Caco-2 (cell line): ENCODE measurements at regions of chr2 and their contacts with region 1.

Region 1: DNA sequence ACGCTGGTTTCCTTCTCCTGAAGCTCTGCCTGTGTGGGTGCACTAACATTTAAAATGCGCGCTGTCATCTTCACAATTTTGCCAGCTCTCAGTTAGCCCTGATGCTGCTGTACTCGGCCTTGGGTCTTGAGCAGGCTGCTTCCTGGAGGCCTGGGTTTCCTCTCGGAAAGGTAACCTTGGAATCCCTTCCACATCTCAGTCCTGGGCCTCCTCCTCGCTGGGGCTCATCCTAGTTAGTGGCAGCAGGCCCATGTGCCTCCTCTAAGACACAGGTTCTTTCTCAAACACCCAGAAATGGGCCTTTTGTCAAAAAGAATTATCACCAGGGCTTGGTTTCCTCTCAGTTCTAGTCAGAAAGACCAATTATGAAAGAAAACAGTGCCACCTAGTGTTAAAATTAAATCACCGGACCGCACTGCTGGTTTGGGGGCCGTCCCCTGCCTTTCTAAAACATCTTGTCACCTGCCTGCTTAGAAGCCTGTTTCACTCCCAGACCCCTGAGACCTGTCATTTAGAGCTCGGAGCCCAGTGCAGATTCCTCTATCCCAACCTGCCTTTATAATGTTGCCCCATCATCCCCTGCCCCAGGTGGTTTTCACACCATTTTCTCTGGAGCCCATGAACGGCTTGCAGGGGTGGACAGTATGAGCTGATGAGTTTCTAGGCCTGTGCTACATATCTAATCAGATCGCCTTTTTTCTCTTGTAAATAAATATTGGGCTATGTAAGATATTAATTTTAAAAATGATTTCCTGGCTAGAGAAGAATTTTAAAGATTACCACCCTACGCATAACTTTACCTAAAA is 42.4 kb downstream of the HK2 start:
- DNase-seq: peak in 1 of 2 experiments; percentile 74
- H3K4me3 ChIP-seq: no peak overlapping the region
- H3K4me3 Mint-ChIP-seq: no peak overlapping the region
- H3K27ac Mint-ChIP-seq: peak overlapping the region; percentile 74
- H3K4me1 ChIP-seq: no peaks in the 10 kb centered on the region
- H3K4me1 Mint-ChIP-seq: no peaks in the 10 kb centered on the region
- H3K27me3 ChIP-seq: no peaks in the 10 kb centered on the region
- H3K27me3 Mint-ChIP-seq: no peaks in the 10 kb centered on the region
- CTCF ChIP-seq: peak; percentile 50 to 65

Region 2: DNA sequence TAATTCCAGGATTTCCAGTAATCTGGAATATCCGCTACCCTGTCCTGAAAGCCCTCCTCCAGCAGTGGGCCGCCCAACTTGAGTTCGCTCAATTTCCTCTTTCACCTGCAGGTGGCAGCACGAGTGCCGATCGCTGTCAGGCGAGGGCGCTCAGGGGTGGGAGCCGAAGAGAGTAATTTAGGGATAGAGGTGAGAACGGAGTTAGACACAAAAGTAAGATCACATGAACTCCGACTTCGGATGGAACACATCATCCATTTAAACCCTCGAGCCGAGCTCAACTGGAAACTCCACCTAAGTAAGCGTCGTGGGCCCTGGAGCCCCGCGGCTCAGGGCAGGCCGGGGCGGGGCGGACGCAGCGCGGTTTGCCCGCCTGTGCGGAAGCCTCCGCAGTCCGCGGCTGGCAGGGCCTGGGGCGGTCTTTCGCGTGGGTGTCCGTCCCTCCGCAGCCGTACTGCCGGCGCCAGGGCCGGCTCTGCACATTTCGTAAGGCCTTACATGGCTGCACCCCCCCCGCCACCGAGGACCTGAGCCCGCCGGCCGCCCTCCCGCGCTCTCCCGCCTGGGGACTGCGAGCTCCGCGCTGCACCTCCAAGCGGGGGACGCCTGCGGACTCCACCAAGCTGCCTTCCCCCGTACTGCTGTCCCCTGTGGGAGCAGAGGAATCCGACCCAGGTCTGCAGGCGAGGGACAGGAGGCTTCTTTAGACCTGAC is 161.0 kb before region 1 on chr2:
- CTCF ChIA-PET with region 1: interaction called, 22 read pairs
- POLR2A ChIA-PET with region 1: no interaction called
- intact Hi-C with region 1: loop called (anchors 1 kb)
- DNase-seq: peak; percentile 80 to 90
- H3K4me3 ChIP-seq: peak overlapping the region; percentile 62
- H3K4me3 Mint-ChIP-seq: peak overlapping the region; percentile 86
- H3K27ac Mint-ChIP-seq: no peak overlapping the region
- H3K4me1 ChIP-seq: no peaks in the 10 kb centered on the region
- H3K4me1 Mint-ChIP-seq: no peaks in the 10 kb centered on the region
- H3K27me3 ChIP-seq: no peaks in the 10 kb centered on the region; the same call in 1 of the 2 replicates
- H3K27me3 Mint-ChIP-seq: peaks cover 5% of the 10 kb centered on the region
- CTCF ChIP-seq: peak; percentile 88 to 95

Region 3: DNA sequence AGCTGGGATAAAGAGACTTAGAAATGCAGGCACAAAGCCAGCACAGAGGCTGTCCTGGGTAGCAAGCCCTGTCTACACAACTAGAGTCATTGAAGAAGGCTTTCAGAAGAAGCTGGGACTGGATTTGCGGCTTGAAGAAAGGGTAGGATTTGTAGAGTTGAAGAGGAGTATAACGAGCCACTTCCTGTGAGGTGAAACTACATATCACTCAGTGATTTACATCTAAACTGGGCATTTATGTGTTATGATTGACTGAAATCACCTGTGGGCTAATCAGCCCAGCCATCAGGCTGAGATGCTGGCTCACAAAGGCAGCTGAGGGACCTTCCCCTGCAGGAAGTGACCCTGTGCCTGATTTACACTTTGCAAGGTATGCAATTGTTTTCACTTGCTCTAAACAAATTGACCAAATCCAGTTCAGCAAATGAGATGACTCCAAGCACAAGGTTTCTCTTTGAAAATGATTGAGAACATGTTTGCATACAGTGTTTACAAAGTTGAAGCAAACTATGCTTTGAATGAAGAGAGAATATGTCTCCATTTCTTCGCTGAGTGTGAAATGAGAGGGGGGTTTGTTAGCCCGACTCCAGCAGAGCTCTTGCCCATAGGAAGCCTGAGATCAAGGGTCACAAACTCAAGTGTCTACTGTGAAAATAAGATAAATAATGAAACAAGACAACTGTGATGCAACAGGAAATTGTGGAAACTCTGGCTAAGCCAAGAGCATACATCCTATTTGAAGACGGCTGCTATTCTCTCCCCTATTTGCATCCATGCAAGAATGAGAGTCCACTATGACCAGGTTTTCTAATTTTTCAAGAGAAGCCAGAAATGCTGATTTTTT is 111.6 kb before region 1 on chr2:
- CTCF ChIA-PET with region 1: interaction called, 6 read pairs
- POLR2A ChIA-PET with region 1: no interaction called
- intact Hi-C with region 1: loop called (anchors 1 kb)
- DNase-seq: peak; percentile 51 to 79
- H3K4me3 ChIP-seq: no peak overlapping the region
- H3K4me3 Mint-ChIP-seq: no peak overlapping the region
- H3K27ac Mint-ChIP-seq: no peak overlapping the region
- H3K4me1 ChIP-seq: peaks cover 30% of the 10 kb centered on the region
- H3K4me1 Mint-ChIP-seq: peaks cover 41% of the 10 kb centered on the region
- H3K27me3 ChIP-seq: no peaks in the 10 kb centered on the region
- H3K27me3 Mint-ChIP-seq: no peaks in the 10 kb centered on the region
- CTCF ChIP-seq: no peak

Region 4: GRCh38 chr2:74958274-74959105 is 82.2 kb after region 1 on chr2 and contains the start of gene POLE4:
- CTCF ChIA-PET with region 1: no interaction called
- POLR2A ChIA-PET with region 1: no interaction called
- intact Hi-C with region 1: no loop called
- DNase-seq: peak; percentile 95 to 96
- H3K4me3 ChIP-seq: peak within 1 kb of the TSS; percentile 90
- H3K4me3 Mint-ChIP-seq: peak within 1 kb of the TSS; percentile 92
- H3K27ac Mint-ChIP-seq: peak within 1 kb of the TSS; percentile 98
- H3K4me1 ChIP-seq: peaks cover 14% of the 10 kb centered on the region
- H3K4me1 Mint-ChIP-seq: peaks cover 22% of the 10 kb centered on the region
- H3K27me3 ChIP-seq: no peaks in the 10 kb centered on the region
- H3K27me3 Mint-ChIP-seq: no peaks in the 10 kb centered on the region
- CTCF ChIP-seq: peak in 1 of 2 experiments; percentile 2
- total RNA-seq, gene POLE4: 101 and 117 TPM in 2 replicates